ENCODE measurements at regions of chr3 and their contacts with region 1.

Region 1: GRCh38 chr3:112303764-112304325 is 9.8 kb upstream of the SLC9C1 start:
- DNase-seq: no peak
- ATAC-seq: peak; percentile 7
- H3K4me3 Mint-ChIP-seq: no peak overlapping the region
- H3K27ac Mint-ChIP-seq: no peak overlapping the region
- H3K4me1 Mint-ChIP-seq: peaks cover 21% of the 10 kb centered on the region
- H3K27me3 Mint-ChIP-seq: no peaks in the 10 kb centered on the region
- CTCF ChIP-seq: no peak

Region 2: DNA sequence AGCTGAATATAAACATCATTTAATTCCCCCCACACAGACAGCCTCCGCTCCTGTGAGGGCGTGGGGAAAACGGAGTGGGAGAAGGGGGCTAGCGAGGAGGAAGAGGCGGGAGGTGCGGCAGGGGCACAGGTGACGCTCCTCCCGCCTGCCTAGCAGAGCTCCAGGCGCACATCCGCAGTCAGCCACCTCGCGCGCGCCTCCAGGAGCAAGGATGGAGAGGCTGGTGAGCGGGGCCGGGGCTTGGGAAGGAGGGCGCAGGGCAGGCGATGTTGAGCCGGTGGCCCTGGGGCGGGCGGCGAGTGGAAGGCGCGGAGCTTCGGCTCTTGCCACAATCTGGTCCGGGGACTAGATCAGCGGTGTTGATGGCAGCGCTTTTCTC is 29.1 kb after region 1 on chr3 and contains the start of gene CD200:
- CTCF ChIA-PET with region 1: interaction called, 19 read pairs
- POLR2A ChIA-PET with region 1: interaction called, 5 read pairs
- DNase-seq: peak; percentile 85
- ATAC-seq: peak; percentile 86
- H3K4me3 Mint-ChIP-seq: peak within 1 kb of the TSS; percentile 88
- H3K27ac Mint-ChIP-seq: peak within 1 kb of the TSS; percentile 96
- H3K4me1 Mint-ChIP-seq: peaks cover 40% of the 10 kb centered on the region
- H3K27me3 Mint-ChIP-seq: no peaks in the 10 kb centered on the region
- CTCF ChIP-seq: no peak
- total RNA-seq, gene CD200: 46.8 to 56.1 TPM (median 54.1 TPM) in 3 replicates

Region 3: GRCh38 chr3:112345681-112346080 is 41.8 kb after region 1 on chr3:
- CTCF ChIA-PET with region 1: no interaction called
- POLR2A ChIA-PET with region 1: no interaction called
- DNase-seq: no peak
- ATAC-seq: no peak
- H3K4me3 Mint-ChIP-seq: no peak overlapping the region
- H3K27ac Mint-ChIP-seq: 0 out of 2 replicates have a peak overlapping the region, but pooled peaks have one; percentile 1
- H3K4me1 Mint-ChIP-seq: peaks cover 59% of the 10 kb centered on the region
- H3K27me3 Mint-ChIP-seq: no peaks in the 10 kb centered on the region
- CTCF ChIP-seq: no peak

Region 4: GRCh38 chr3:112550859-112551258 is 247.0 kb after region 1 on chr3:
- CTCF ChIA-PET with region 1: no interaction called
- POLR2A ChIA-PET with region 1: no interaction called
- DNase-seq: no peak
- ATAC-seq: peak; percentile 78
- H3K4me3 Mint-ChIP-seq: no peak overlapping the region
- H3K27ac Mint-ChIP-seq: no peak overlapping the region
- H3K4me1 Mint-ChIP-seq: no peaks in the 10 kb centered on the region
- H3K27me3 Mint-ChIP-seq: no peaks in the 10 kb centered on the region
- CTCF ChIP-seq: no peak

Measured in WTC11 (cell line).